Astrocyte of the cerebellum (primary cell): ENCODE measurements at regions of chr9 and their contacts with region 1.

Region 1: DNA sequence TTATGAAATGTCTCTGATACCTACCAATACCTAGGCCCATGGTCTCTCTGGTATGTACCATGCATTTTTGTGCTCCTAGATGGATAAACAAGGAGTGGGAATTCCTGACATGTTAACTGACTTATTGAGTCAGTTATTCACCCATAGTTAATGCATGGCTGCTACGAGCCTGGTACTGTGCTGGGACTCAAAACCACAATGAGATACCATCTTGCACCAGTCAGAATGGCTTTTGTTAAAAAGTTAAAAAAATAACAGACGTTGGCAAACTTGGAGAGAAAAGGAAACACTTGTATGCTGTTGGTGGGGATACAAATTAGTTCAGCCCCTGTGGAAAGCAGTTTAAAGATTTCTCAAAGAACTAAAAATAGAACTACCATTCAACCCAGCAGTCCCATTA is 293.8 kb downstream of the OSTF1 start:
- DNase-seq: no peak
- H3K4me3 ChIP-seq: no peak overlapping the region
- CTCF ChIP-seq: no peak

Region 2: DNA sequence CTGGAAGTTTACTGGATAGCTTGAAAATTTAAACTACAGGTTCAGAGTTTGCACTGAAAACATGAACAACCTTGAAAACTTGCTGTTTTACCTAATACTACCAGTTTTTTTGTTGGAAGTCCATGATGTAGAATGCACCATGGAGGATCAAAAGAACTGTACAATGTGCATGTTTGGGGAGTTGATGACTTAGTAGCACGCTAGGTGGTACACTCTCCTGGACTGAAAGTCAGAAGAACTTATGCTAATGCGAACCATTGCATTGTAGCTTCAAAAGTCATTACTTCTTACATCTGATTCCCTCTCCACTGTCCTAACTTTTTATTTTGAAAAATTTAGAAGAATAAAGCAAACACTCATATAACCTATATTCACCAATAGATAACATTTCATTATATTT is 82.8 kb before region 1 on chr9:
- in situ Hi-C with region 1: no loop called
- DNase-seq: no peak
- H3K4me3 ChIP-seq: no peak overlapping the region
- CTCF ChIP-seq: no peak

Region 3: DNA sequence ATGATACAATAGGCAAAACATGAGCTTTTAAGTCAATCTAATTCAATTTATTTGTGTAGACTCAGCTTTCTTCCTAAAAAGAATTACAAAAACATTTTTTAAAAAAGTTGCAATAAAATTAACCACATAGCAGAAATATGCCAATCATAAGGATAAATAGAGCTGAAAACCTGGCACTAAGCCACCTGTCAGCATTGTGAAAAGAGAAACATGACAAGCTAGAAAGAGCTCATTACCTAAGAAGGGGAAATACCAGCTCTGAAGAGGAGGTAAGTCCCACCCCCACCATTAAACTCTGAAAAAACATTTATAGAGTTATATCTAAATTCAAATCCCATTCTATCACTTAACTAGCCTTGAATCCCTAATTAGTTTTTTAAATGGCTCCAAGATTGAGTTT is 79.1 kb after region 1 on chr9:
- in situ Hi-C with region 1: loop called (anchors 5 kb)
- DNase-seq: no peak
- H3K4me3 ChIP-seq: no peak overlapping the region
- CTCF ChIP-seq: no peak

Region 4: DNA sequence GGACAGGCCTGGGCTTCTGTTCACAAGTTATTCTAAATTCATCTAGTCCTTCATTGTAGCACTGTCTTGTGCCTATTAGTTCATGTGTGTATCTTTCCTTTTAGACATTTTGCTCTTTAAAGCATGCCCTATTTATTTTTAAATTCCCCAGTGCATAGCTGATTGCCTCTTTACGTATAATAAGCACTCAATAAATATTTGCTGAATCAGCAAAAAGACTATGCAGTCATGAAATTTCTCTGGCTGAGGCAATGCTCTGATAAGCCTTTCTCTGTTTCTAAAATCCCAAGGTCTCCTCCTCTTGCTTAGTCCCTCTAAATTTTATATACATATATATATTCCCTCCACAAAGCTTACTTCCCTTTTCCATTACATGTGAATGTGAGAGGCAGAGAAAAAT is 192.4 kb after region 1 on chr9:
- in situ Hi-C with region 1: no loop called
- DNase-seq: no peak
- H3K4me3 ChIP-seq: no peak overlapping the region
- CTCF ChIP-seq: no peak